CD8-positive, alpha-beta memory T cell (primary cell): ENCODE measurements at regions of chr14 and their contacts with region 1.

Region 1: GRCh38 chr14:39266871-39267591 is 33.3 kb downstream of the MIA2 start:
- DNase-seq: peak; percentile 62 to 83 (median 76)
- H3K4me3 ChIP-seq: peak overlapping the region; percentile 92
- H3K4me3 Mint-ChIP-seq: peak overlapping the region; percentile 84 to 97 (median 95)
- H3K27ac ChIP-seq: peak overlapping the region; percentile 91
- H3K27ac Mint-ChIP-seq: peak overlapping the region; percentile 82 to 99 (median 98)
- H3K4me1 ChIP-seq: peaks cover 33% of the 10 kb centered on the region
- H3K4me1 Mint-ChIP-seq: peaks cover 51 to 60% (median 59%) of the 10 kb centered on the region in 3 donors
- H3K27me3 ChIP-seq: no peaks in the 10 kb centered on the region
- H3K27me3 Mint-ChIP-seq: no peaks in the 10 kb centered on the region

Region 2: DNA sequence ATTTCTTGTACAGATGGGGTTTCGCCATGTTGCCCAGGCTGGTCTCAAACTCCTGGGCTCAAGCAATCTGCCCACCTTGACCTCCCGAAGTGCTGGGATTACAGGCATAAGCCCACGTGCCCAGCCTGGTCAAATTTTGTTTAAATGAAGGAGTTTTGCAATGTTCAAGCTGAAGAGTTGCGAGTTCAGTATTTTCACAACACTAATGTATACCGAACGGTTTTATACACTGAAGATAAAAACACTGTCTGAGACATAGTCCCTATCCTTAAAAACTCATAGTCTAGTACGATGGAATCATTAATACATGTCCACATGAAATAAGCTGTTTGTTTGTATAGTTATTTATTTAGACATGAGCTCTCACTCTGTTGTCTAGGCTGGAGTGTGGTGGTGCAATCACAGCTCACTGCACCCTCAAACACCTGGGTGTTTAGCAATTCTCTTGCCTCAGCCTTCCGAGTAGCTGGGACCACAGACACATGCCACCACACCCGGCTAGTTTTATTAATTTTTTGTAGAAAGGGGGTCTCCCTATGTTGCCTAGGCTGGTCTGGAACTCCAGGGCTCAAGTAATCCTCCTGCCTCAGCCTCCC is 112.3 kb before region 1 on chr14:
- CTCF ChIA-PET with region 1: no interaction called
- POLR2A ChIA-PET with region 1: no interaction called
- DNase-seq: no peak
- H3K4me3 ChIP-seq: no peak overlapping the region
- H3K4me3 Mint-ChIP-seq: no peak overlapping the region
- H3K27ac ChIP-seq: no peak overlapping the region
- H3K27ac Mint-ChIP-seq: peak overlapping the region in 1 of 8 donors; percentile 80
- H3K4me1 ChIP-seq: no peaks in the 10 kb centered on the region
- H3K4me1 Mint-ChIP-seq: peaks cover 0 to 8% (median 4%) of the 10 kb centered on the region in 3 donors
- H3K27me3 ChIP-seq: no peaks in the 10 kb centered on the region
- H3K27me3 Mint-ChIP-seq: no peaks in the 10 kb centered on the region

Region 3: DNA sequence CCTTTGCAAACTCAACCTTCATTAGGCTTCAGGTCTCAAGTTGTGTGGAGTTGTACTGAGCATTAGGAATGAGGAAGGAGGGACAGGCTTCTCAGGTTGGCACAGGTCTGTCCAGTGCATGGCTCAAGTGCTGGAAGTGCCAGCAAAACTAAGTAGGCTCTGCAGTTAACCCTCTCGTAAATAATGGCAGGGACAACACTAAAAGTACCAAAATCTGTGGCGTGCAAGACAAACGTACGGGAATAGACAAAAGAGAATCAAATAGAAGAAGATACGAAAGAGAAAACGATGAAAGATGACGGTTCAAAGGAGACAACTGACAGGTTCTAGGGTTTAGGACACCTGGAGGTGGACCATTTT is 97.5 kb before region 1 on chr14:
- CTCF ChIA-PET with region 1: interaction called, 5 read pairs
- POLR2A ChIA-PET with region 1: interaction called, 14 read pairs
- DNase-seq: no peak
- H3K4me3 ChIP-seq: peak overlapping the region; percentile 88
- H3K4me3 Mint-ChIP-seq: peak overlapping the region; percentile 89 to 100 (median 99)
- H3K27ac ChIP-seq: peak overlapping the region; percentile 98
- H3K27ac Mint-ChIP-seq: peak overlapping the region; percentile 89 to 100 (median 98)
- H3K4me1 ChIP-seq: peaks cover 41% of the 10 kb centered on the region
- H3K4me1 Mint-ChIP-seq: peaks cover 47 to 66% (median 63%) of the 10 kb centered on the region in 3 donors
- H3K27me3 ChIP-seq: no peaks in the 10 kb centered on the region
- H3K27me3 Mint-ChIP-seq: no peaks in the 10 kb centered on the region

Region 4: DNA sequence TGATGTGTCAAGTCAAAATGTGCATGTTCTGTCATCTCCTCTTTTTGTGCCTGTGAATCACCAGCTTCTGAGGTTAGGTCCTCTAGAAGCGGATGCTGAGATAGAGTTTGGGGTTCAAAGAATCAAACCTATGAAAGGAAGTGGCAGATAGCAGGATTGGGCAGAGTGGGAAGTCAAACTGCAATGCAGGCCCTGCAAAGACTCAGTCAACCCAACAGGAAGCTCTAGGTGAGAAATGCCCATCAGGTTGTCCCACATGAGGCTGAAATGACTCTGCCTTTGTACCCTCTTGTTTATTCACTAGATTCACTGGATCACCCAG is 37.8 kb before region 1 on chr14:
- CTCF ChIA-PET with region 1: interaction called, 4 read pairs
- POLR2A ChIA-PET with region 1: interaction called, 14 read pairs
- DNase-seq: peak in 4 of 5 donors; percentile 38 to 77 (median 56)
- H3K4me3 ChIP-seq: no peak overlapping the region
- H3K4me3 Mint-ChIP-seq: peak overlapping the region; percentile 8 to 65 (median 38)
- H3K27ac ChIP-seq: peak overlapping the region; percentile 35
- H3K27ac Mint-ChIP-seq: peak overlapping the region; percentile 77 to 98 (median 92)
- H3K4me1 ChIP-seq: peaks cover 23% of the 10 kb centered on the region
- H3K4me1 Mint-ChIP-seq: peaks cover 44 to 52% (median 50%) of the 10 kb centered on the region in 3 donors
- H3K27me3 ChIP-seq: no peaks in the 10 kb centered on the region
- H3K27me3 Mint-ChIP-seq: no peaks in the 10 kb centered on the region

Region 5: GRCh38 chr14:39251547-39251946 is 15.5 kb before region 1 on chr14:
- CTCF ChIA-PET with region 1: no interaction called
- POLR2A ChIA-PET with region 1: no interaction called
- DNase-seq: no peak
- H3K4me3 ChIP-seq: no peak overlapping the region
- H3K4me3 Mint-ChIP-seq: no peak overlapping the region
- H3K27ac ChIP-seq: no peak overlapping the region
- H3K27ac Mint-ChIP-seq: no peak overlapping the region
- H3K4me1 ChIP-seq: no peaks in the 10 kb centered on the region
- H3K4me1 Mint-ChIP-seq: no peaks in the 10 kb centered on the region
- H3K27me3 ChIP-seq: no peaks in the 10 kb centered on the region
- H3K27me3 Mint-ChIP-seq: peaks cover 0 to 11% of the 10 kb centered on the region in 2 donors